ENCODE measurements at regions of chr6 and their contacts with region 1.

Region 1: GRCh38 chr6:33248925-33249731 is 22.5 kb downstream of the VPS52 start:
- DNase-seq: peak; percentile 94 to 98 (median 97)
- H3K4me3 ChIP-seq: peak overlapping the region; percentile 60 to 65
- H3K4me3 Mint-ChIP-seq: peak overlapping the region; percentile 84 to 95 (median 88)
- H3K27ac ChIP-seq: peak overlapping the region; percentile 93
- H3K27ac Mint-ChIP-seq: peak overlapping the region; percentile 90 to 98 (median 97)
- H3K4me1 ChIP-seq: peaks cover 26% of the 10 kb centered on the region
- H3K4me1 Mint-ChIP-seq: peaks cover 19 to 47% (median 30%) of the 10 kb centered on the region in 4 donors
- H3K27me3 ChIP-seq: no peaks in the 10 kb centered on the region
- H3K27me3 Mint-ChIP-seq: peaks cover 0 to 3% of the 10 kb centered on the region in 2 donors

Region 2: DNA sequence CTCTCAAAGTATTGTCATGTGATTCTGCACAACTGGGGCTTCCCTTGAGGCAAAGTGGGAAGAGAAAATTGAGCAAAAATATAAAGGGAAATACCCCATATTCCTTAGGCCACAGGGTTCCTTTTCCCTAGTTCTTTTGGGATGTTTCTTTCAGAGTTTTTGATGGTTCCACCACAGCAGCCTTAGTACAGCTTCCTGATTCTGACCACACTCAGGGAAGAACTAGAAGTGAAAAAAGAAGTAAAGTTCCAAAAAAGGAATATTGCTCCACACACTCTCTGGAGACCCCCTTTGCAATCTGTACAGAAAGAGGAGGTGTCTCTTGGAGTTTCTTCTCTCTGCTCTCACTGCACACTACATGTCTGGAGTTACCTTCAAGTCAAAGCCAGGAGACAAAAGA is 535.9 kb before region 1 on chr6:
- CTCF ChIA-PET with region 1: no interaction called
- POLR2A ChIA-PET with region 1: no interaction called
- intact Hi-C with region 1: no loop called
- DNase-seq: no peak
- H3K4me3 ChIP-seq: no peak overlapping the region
- H3K4me3 Mint-ChIP-seq: no peak overlapping the region
- H3K27ac ChIP-seq: no peak overlapping the region
- H3K27ac Mint-ChIP-seq: no peak overlapping the region
- H3K4me1 ChIP-seq: no peaks in the 10 kb centered on the region
- H3K4me1 Mint-ChIP-seq: no peaks in the 10 kb centered on the region
- H3K27me3 ChIP-seq: no peaks in the 10 kb centered on the region
- H3K27me3 Mint-ChIP-seq: peaks cover 7 to 10% of the 10 kb centered on the region in 2 donors

Region 3: DNA sequence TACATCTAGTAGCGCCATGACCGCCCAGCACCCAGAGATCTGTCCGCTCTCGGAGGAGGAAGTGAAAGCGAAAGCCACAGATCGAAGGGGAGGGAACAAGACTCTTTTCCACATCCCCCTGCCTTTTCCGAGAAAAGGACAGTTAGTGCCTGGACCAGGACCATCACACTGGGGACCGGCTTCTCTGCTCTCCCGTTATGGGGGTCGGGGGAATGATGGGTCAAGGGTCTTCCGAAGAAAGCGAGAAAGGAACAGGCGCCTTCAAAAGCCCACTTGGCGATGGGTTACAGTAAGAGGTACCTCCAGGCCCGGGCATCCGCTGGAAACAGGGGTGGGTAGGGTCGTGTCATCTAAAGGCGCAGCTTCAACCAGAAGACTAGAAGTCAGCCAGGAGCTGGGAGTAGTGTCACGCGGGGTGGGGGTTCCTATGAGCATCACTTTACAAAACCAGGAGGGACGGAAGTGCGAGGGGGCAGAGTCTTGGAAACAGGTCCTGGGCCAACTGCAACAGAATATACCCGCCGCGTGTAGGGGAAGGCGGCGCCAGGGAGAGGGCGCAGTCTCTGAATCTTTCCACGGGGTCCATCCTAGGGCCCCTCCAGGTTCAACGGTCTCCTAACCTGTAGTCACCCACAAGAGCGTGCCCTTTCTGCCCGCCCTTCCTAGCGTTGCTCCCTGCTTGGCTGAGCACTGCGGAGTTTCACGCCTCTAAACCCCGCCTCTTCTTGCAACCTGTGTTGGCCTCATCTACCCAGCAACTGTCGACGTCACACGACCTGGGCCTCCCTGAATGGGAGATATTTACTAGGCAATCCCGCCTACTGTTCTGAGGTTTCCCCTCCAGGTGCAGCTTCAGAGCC is 404.9 kb before region 1 on chr6 and contains the start of gene PSMB8:
- CTCF ChIA-PET with region 1: no interaction called
- POLR2A ChIA-PET with region 1: interaction called, 10 read pairs
- intact Hi-C with region 1: no loop called
- DNase-seq: peak; percentile 97 to 100 (median 98)
- H3K4me3 ChIP-seq: peak within 1 kb of the TSS; percentile 89 to 98
- H3K4me3 Mint-ChIP-seq: peak within 1 kb of the TSS; percentile 94 to 100 (median 97)
- H3K27ac ChIP-seq: peak within 1 kb of the TSS; percentile 99
- H3K27ac Mint-ChIP-seq: peak within 1 kb of the TSS; percentile 99 to 100 (median 99)
- H3K4me1 ChIP-seq: peaks cover 81% of the 10 kb centered on the region
- H3K4me1 Mint-ChIP-seq: peaks cover 61 to 98% (median 72%) of the 10 kb centered on the region in 4 donors
- H3K27me3 ChIP-seq: no peaks in the 10 kb centered on the region
- H3K27me3 Mint-ChIP-seq: no peaks in the 10 kb centered on the region
- total RNA-seq, gene PSMB8: 134 to 138 TPM

Region 4: DNA sequence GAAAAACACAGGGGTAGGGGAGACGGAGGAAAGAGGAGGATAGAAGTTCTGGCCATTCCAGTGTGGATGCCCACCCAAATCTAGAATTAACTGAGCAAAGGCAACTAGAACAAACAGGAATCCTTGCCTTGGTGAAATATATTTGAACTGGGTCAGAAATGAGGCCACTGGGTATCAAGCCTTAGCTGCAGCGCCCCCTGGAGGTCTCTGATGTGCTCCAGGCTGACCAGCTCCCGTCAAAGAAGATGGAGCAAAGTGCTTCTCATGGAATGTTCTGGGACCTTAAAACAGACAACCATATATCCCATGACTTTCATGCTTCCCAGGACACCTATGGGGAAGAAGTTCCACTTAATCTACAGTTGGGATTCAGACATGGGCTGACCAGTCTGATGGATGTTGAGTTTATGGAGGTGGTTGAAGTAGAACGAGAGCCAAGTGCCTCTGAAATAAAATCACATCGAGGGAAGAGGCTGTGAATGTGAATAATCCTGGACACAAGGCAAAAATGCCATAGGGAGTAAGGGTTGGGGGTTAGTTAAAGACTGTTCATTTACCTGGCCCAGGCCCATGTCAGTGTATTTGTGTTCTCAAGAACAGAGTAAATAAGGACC is 122.9 kb before region 1 on chr6:
- CTCF ChIA-PET with region 1: interaction called, 11 read pairs
- POLR2A ChIA-PET with region 1: no interaction called
- intact Hi-C with region 1: no loop called
- DNase-seq: peak in 4 of 5 donors; percentile 26 to 41 (median 35)
- H3K4me3 ChIP-seq: no peak overlapping the region
- H3K4me3 Mint-ChIP-seq: no peak overlapping the region
- H3K27ac ChIP-seq: no peak overlapping the region
- H3K27ac Mint-ChIP-seq: no peak overlapping the region
- H3K4me1 ChIP-seq: no peaks in the 10 kb centered on the region
- H3K4me1 Mint-ChIP-seq: no peaks in the 10 kb centered on the region
- H3K27me3 ChIP-seq: no peaks in the 10 kb centered on the region
- H3K27me3 Mint-ChIP-seq: peaks cover 19 to 28% of the 10 kb centered on the region in 2 donors

Region 5: DNA sequence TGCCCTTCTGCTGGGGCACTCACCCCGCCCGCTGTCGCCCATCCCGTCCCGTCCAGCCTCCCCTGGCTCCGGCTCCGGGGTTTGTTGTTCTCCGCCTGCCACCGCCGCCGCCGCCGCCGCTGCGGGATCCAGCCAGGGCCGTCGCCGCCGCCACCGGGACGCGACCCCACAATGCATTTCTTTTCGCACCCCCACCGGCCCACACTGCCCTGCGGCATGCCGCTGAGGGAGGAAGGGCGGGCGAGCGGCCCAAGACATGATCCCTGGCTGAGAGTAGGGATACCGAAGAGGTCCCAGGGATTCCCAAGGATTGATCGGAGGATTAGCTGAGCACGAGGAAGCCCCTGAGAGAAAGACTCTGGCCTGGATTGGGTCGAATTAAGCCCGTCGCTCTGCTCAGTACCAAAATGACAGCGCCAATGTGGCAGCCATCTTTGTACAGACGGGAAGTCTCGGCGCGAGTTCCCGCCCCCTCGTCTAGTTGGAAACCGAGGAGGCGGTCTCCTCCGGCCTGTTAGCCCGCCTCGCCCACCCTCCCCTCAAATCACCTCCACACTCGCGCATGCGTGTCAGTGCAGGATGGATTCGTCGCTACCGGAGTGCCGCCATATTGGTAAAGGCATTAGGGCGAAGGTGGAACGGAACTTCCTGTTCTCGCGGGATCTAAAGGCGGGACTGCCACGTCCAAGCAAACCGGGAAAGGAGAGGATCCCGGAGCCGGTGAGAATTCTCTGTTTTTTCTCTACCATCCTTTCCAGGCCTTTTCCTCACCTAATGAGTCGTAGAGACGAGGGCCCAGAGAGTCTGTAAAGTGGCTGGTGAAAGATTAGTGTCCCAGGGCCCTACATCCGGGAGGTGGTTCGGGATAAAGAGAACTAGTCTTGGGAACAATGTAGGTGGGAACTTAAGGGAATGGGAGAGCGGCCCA is 48.6 kb before region 1 on chr6 and contains the starts of genes RXRB and SLC39A7:
- CTCF ChIA-PET with region 1: interaction called, 25 read pairs
- POLR2A ChIA-PET with region 1: interaction called, 20 read pairs
- intact Hi-C with region 1: loop called (anchors 1 kb)
- DNase-seq: peak; percentile 95 to 99 (median 98)
- H3K4me3 ChIP-seq: peak within 1 kb of the TSS; percentile 99
- H3K4me3 Mint-ChIP-seq: peak within 1 kb of the TSS; percentile 98 to 100 (median 99)
- H3K27ac ChIP-seq: peak within 1 kb of the TSS; percentile 88
- H3K27ac Mint-ChIP-seq: peak within 1 kb of the TSS; percentile 96 to 99 (median 98)
- H3K4me1 ChIP-seq: peaks cover 62% of the 10 kb centered on the region
- H3K4me1 Mint-ChIP-seq: peaks cover 45 to 82% (median 64%) of the 10 kb centered on the region in 4 donors
- H3K27me3 ChIP-seq: no peaks in the 10 kb centered on the region
- H3K27me3 Mint-ChIP-seq: no peaks in the 10 kb centered on the region
- total RNA-seq, gene RXRB: 89.2 to 94.3 TPM
- total RNA-seq, gene SLC39A7: 40.8 to 40.9 TPM

Region 6: GRCh38 chr6:33271458-33272274 is 22.5 kb after region 1 on chr6 and contains the starts of genes RPS18 and VPS52:
- CTCF ChIA-PET with region 1: interaction called, 35 read pairs
- POLR2A ChIA-PET with region 1: interaction called, 92 read pairs
- intact Hi-C with region 1: loop called (anchors 1 kb)
- DNase-seq: peak; percentile 95 to 98 (median 96)
- H3K4me3 ChIP-seq: peak within 1 kb of the TSS; percentile 75 to 90
- H3K4me3 Mint-ChIP-seq: peak within 1 kb of the TSS; percentile 96 to 100 (median 98)
- H3K27ac ChIP-seq: peak within 1 kb of the TSS; percentile 85
- H3K27ac Mint-ChIP-seq: peak within 1 kb of the TSS; percentile 97 to 100 (median 99)
- H3K4me1 ChIP-seq: peaks cover 62% of the 10 kb centered on the region
- H3K4me1 Mint-ChIP-seq: peaks cover 43 to 78% (median 61%) of the 10 kb centered on the region in 4 donors
- H3K27me3 ChIP-seq: no peaks in the 10 kb centered on the region
- H3K27me3 Mint-ChIP-seq: no peaks in the 10 kb centered on the region
- total RNA-seq, gene RPS18: 3,264 to 3,439 TPM
- total RNA-seq, gene VPS52: 89.4 to 95.7 TPM

Region 7: GRCh38 chr6:33299237-33299944 is 50.3 kb after region 1 on chr6:
- CTCF ChIA-PET with region 1: interaction called, 5 read pairs
- POLR2A ChIA-PET with region 1: interaction called, 18 read pairs
- intact Hi-C with region 1: loop called (anchors 1 kb)
- DNase-seq: peak; percentile 91 to 94 (median 93)
- H3K4me3 ChIP-seq: peak overlapping the region; percentile 71 to 97
- H3K4me3 Mint-ChIP-seq: peak overlapping the region; percentile 99
- H3K27ac ChIP-seq: peak overlapping the region; percentile 94
- H3K27ac Mint-ChIP-seq: peak overlapping the region; percentile 96 to 100 (median 99)
- H3K4me1 ChIP-seq: peaks cover 27% of the 10 kb centered on the region
- H3K4me1 Mint-ChIP-seq: peaks cover 22 to 42% (median 31%) of the 10 kb centered on the region in 4 donors
- H3K27me3 ChIP-seq: no peaks in the 10 kb centered on the region
- H3K27me3 Mint-ChIP-seq: peaks cover 0 to 4% of the 10 kb centered on the region in 2 donors

Region 8: GRCh38 chr6:33391278-33391921 is 142.3 kb after region 1 on chr6 and contains the start of gene KIFC1:
- CTCF ChIA-PET with region 1: no interaction called
- POLR2A ChIA-PET with region 1: interaction called, 4 read pairs
- intact Hi-C with region 1: loop called (anchors 1 kb)
- DNase-seq: peak; percentile 99
- H3K4me3 ChIP-seq: peak within 1 kb of the TSS; percentile 18 to 78
- H3K4me3 Mint-ChIP-seq: peak within 1 kb of the TSS; percentile 83 to 94 (median 86)
- H3K27ac ChIP-seq: peak within 1 kb of the TSS; percentile 74
- H3K27ac Mint-ChIP-seq: peak within 1 kb of the TSS; percentile 89 to 99 (median 98)
- H3K4me1 ChIP-seq: peaks cover 21% of the 10 kb centered on the region
- H3K4me1 Mint-ChIP-seq: peaks cover 25 to 40% (median 30%) of the 10 kb centered on the region in 4 donors
- H3K27me3 ChIP-seq: no peaks in the 10 kb centered on the region
- H3K27me3 Mint-ChIP-seq: no peaks in the 10 kb centered on the region
- total RNA-seq, gene KIFC1: 0.61 to 0.69 TPM